CD14-positive monocyte (primary cell): ENCODE measurements at regions of chrX and their contacts with region 1.

Region 1: GRCh38 chrX:41250867-41251266 is 83.1 kb upstream of the DDX3X start:
- DNase-seq: no peak
- H3K4me3 ChIP-seq: no peak overlapping the region
- H3K4me3 Mint-ChIP-seq: peak overlapping the region in 1 of 2 donors; percentile 12
- H3K27ac ChIP-seq: no peak overlapping the region
- H3K27ac Mint-ChIP-seq: peak overlapping the region in 1 of 7 donors; percentile 17
- H3K4me1 ChIP-seq: peaks cover 7 to 8% of the 10 kb centered on the region in 2 donors
- H3K4me1 Mint-ChIP-seq: peaks cover 14% of the 10 kb centered on the region
- H3K27me3 ChIP-seq: no peaks in the 10 kb centered on the region
- H3K27me3 Mint-ChIP-seq: peaks cover 1 to 23% (median 1%) of the 10 kb centered on the region in 3 donors
- CTCF ChIP-seq: no peak

Region 2: GRCh38 chrX:41180194-41180908 is 70.5 kb before region 1 on chrX:
- intact Hi-C with region 1: loop called in 1 of 2 experiments (anchors 5 kb)
- DNase-seq: peak; percentile 38 to 44 (median 40)
- H3K4me3 ChIP-seq: no peak overlapping the region
- H3K4me3 Mint-ChIP-seq: no peak overlapping the region
- H3K27ac ChIP-seq: peak overlapping the region in 1 of 2 donors; percentile 59
- H3K27ac Mint-ChIP-seq: peak overlapping the region in 4 of 7 donors; percentile 37 to 77 (median 51)
- H3K4me1 ChIP-seq: peaks cover 3 to 13% of the 10 kb centered on the region in 2 donors
- H3K4me1 Mint-ChIP-seq: peaks cover 11% of the 10 kb centered on the region
- H3K27me3 ChIP-seq: no peaks in the 10 kb centered on the region
- H3K27me3 Mint-ChIP-seq: peaks cover 0 to 13% (median 0%) of the 10 kb centered on the region in 3 donors
- CTCF ChIP-seq: peak; percentile 72